Transverse colon (tissue), 4 donors: ENCODE measurements at regions of chr9 and their contacts with region 1.

Region 1: DNA sequence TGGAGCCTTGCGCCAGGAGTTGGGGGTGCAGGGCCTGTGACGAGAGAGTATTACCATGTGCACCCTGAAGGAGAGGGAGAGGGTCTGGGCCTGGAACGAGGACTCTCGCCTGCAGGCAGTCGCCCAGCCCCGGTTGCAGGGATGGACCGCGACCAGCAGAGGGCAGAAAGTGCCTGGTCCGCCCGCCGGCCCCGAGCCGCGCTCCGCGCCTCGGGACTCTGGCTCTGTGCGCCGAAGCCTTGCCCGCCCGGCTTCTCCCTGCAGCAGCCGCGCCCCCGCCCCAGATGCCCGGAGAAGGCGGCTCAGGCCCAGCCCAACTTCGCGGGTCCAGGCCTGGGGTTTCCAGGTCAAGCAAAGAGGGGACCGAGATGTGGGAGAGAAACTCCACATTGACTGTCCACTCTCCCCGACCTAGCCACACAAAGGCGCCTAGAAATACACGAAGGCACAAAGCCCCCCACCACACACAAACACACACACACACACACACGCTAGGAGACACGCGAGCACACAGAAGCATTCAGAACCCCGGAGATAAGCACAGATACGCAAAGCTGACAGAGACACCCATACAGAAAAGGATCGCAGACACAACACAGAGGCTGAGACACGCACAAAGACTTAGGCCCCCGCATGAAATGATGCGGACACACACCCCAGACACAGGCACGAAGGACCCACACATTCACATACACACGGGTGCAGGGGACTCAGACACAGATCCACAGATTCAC is 2.0 kb upstream of the LMX1B start:
- DNase-seq: peak; percentile 70
- H3K4me3 ChIP-seq: no peak overlapping the region
- H3K27ac ChIP-seq: no peak overlapping the region
- H3K4me1 ChIP-seq: peaks cover 6 to 46% (median 33%) of the 10 kb centered on the region in 4 donors
- H3K27me3 ChIP-seq: peaks cover 94% of the 10 kb centered on the region
- CTCF ChIP-seq: peak; percentile 69 to 89 (median 83)
- EP300 ChIP-seq: no peak
- POLR2A ChIP-seq: no peak

Region 2: GRCh38 chr9:126773004-126773607 is 161.3 kb after region 1 on chr9:
- in situ Hi-C with region 1: loop called in 1 of 4 experiments (anchors 25 kb)
- intact Hi-C with region 1: loop called (anchors 10 kb)
- DNase-seq: no peak
- H3K4me3 ChIP-seq: no peak overlapping the region
- H3K27ac ChIP-seq: no peak overlapping the region
- H3K4me1 ChIP-seq: no peaks in the 10 kb centered on the region
- H3K27me3 ChIP-seq: peaks cover 97% of the 10 kb centered on the region
- CTCF ChIP-seq: peak; percentile 15 to 43 (median 37)
- EP300 ChIP-seq: no peak
- POLR2A ChIP-seq: no peak

Region 3: DNA sequence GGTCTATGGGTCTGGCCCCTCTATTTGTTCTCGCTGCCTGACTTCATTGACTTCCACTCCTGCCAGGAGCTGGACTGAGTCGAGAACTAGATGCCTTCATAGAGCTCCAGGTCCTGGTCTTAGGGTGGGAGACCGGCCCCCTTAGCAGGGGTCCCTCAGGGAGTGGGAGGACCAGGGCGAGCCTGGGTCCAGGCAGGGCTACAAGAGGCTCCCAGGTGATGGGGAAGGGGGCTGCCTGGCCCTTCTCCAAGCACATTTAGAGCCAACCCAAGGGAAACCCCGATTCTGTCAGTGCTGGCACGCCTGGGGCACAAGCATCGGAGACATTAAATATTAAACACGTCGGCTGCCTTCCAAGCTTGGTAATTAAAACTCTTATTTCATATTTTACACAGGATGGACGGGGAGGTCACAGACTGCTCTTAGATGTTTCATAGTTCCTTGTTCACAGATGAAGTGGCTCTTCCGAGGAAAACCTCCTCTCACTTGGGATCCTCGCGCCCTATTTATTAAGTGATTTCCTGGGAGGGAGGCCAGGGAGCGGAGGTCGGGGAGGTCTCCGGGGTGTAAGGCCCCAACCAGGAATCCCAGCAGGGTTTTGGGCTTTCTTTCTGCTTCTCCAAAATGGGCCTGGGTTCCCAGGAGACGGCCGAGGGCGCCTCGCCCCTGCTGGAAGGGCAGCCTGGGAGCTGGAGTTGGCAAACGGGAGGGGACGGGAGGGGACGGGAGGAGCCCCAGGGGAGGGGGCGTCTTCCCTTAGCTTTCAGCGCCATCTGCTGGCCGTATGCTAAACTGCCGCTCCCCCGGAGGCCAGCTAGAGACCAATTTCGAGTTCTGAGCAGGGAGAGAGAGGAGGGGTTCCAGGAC is 169.7 kb after region 1 on chr9:
- in situ Hi-C with region 1: loop called in 1 of 4 experiments (anchors 25 kb)
- intact Hi-C with region 1: loop called (anchors 10 kb)
- DNase-seq: peak; percentile 84
- H3K4me3 ChIP-seq: no peak overlapping the region
- H3K27ac ChIP-seq: no peak overlapping the region
- H3K4me1 ChIP-seq: peaks cover 0 to 5% (median 2%) of the 10 kb centered on the region in 4 donors
- H3K27me3 ChIP-seq: peaks cover 89% of the 10 kb centered on the region
- CTCF ChIP-seq: peak; percentile 94 to 97 (median 95)
- EP300 ChIP-seq: no peak
- POLR2A ChIP-seq: no peak